Lower leg skin (tissue), 4 donors: ENCODE measurements at regions of chr4 and their contacts with region 1.

Region 1: GRCh38 chr4:185936650-185937376 is 124.8 kb upstream of the SORBS2 start:
- DNase-seq: no peak
- H3K4me3 ChIP-seq: no peak overlapping the region
- CTCF ChIP-seq: no peak
- POLR2A ChIP-seq: no peak

Region 2: GRCh38 chr4:185730387-185730786 is 206.4 kb before region 1 on chr4:
- intact Hi-C with region 1: no loop called
- DNase-seq: no peak
- H3K4me3 ChIP-seq: no peak overlapping the region
- CTCF ChIP-seq: no peak
- POLR2A ChIP-seq: no peak

Region 3: GRCh38 chr4:185742766-185743165 is 194.0 kb before region 1 on chr4:
- intact Hi-C with region 1: no loop called
- DNase-seq: no peak
- H3K4me3 ChIP-seq: no peak overlapping the region
- CTCF ChIP-seq: no peak
- POLR2A ChIP-seq: no peak

Region 4: GRCh38 chr4:185895351-185895750 is 41.5 kb before region 1 on chr4:
- intact Hi-C with region 1: loop called (anchors 2 kb)
- DNase-seq: no peak
- H3K4me3 ChIP-seq: no peak overlapping the region
- CTCF ChIP-seq: no peak
- POLR2A ChIP-seq: no peak